Posterior vena cava (tissue), 2 donors: ENCODE measurements at regions of chr4 and their contacts with region 1.

Region 1: DNA sequence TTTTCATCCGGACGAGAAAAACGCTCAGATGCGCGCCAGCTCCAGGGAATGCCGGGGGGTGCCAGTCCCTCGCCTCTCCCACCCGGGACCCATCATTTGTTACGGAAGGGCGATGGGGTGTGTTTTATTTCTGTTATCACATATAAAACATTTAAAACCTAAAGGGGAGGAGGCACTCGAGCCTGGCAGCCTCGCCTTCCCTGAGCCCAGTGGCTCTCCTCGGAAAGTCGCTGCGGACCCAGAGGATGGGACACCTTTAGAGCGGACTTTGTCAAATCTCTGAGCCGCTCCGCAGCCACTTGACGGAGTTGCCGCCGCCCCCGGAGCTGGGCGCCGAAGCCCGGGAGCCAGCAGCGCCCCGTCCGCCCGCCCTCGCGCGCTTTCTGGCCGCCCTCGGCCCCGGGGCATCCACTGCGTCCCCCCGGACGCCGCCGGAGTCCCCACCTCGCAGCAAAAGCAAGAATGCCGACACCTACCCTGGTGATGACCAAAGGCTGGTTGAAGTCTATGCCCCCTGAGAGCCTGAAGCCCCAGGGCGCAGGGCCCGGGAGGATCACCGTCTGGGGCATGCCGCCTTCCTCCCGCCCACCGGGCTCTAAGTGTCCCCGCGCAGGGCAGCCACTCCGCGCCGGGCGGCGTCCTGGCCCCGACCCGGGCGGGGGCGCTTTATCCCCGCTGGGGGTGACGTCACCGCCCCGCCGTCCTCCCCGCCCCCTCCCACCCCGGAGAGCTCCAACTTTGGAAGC is at the start of gene PDLIM3:
- DNase-seq: peak; percentile 93
- total RNA-seq, gene PDLIM3: 447 to 540 TPM

Region 2: GRCh38 chr4:185573651-185574199 is 38.7 kb after region 1 on chr4:
- intact Hi-C with region 1: loop called in 1 of 2 experiments (anchors 5 kb)
- DNase-seq: peak; percentile 82